ENCODE measurements at regions of chr16 and their contacts with region 1.

Region 1: GRCh38 chr16:4461250-4462085 is 13.0 kb downstream of the NMRAL1 start:
- DNase-seq: no peak

Region 2: DNA sequence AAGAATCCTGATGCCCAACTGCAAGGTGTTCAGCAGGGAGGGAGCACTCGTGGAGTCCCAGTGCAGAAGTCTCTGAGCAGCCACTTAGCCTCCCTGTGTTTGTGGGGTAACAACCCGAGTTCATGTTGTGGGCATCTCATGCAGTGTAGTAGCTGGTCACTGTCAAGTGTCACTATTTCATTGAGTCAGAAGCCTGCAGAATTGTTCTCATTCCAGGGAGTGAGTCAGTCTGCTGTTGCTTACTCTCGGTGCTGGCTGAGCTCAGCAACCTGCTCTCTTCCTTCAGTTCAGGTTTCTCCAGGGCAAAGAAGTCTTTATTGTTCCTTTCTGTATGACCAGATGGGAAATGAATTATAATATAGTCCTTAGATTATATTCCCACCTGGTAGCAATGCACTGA is 38.8 kb after region 1 on chr16:
- in situ Hi-C with region 1: loop called (anchors 5 kb)
- DNase-seq: peak; percentile 58

Measured in Caki2 (cell line).